ENCODE measurements at regions of chr11 and their contacts with region 1.

Region 1: GRCh38 chr11:35391922-35392813 is 27.2 kb downstream of the SLC1A2 start:
- DNase-seq: peak; percentile 93
- ATAC-seq: peak; percentile 96

Region 2: GRCh38 chr11:34926101-34926830 is 465.9 kb before region 1 on chr11:
- intact Hi-C with region 1: loop called (anchors 5 kb)
- DNase-seq: no peak
- ATAC-seq: peak; percentile 65